ENCODE measurements at regions of chr1 and their contacts with region 1.

Region 1: GRCh38 chr1:23867953-23868556 is at the start of gene FUCA1:
- DNase-seq: peak; percentile 97
- H3K4me3 ChIP-seq: peak within 1 kb of the TSS; percentile 74
- H3K27ac ChIP-seq: peak within 1 kb of the TSS; percentile 21
- H3K4me1 ChIP-seq: peaks cover 25% of the 10 kb centered on the region
- CTCF ChIP-seq: peak; percentile 82
- total RNA-seq, gene FUCA1: 9.1 and 9.3 TPM in 2 replicates

Region 2: GRCh38 chr1:23436520-23437354 is 431.3 kb before region 1 on chr1:
- CTCF ChIA-PET with region 1: no interaction called
- POLR2A ChIA-PET with region 1: no interaction called
- intact Hi-C with region 1: no loop called
- DNase-seq: no peak
- H3K4me3 ChIP-seq: no peak overlapping the region
- H3K27ac ChIP-seq: no peak overlapping the region
- H3K4me1 ChIP-seq: peaks cover 8% of the 10 kb centered on the region
- CTCF ChIP-seq: no peak

Region 3: GRCh38 chr1:23809751-23810171 is 58.3 kb before region 1 on chr1:
- CTCF ChIA-PET with region 1: no interaction called
- POLR2A ChIA-PET with region 1: no interaction called
- intact Hi-C with region 1: loop called (anchors 1 kb)
- DNase-seq: peak; percentile 86
- H3K4me3 ChIP-seq: no peak overlapping the region
- H3K27ac ChIP-seq: peak overlapping the region; percentile 25
- H3K4me1 ChIP-seq: peaks cover 41% of the 10 kb centered on the region
- CTCF ChIP-seq: peak; percentile 89

Region 4: GRCh38 chr1:23902321-23903278 is 34.5 kb after region 1 on chr1:
- CTCF ChIA-PET with region 1: no interaction called
- POLR2A ChIA-PET with region 1: no interaction called
- intact Hi-C with region 1: loop called (anchors 1 kb)
- DNase-seq: no peak
- H3K4me3 ChIP-seq: no peak overlapping the region
- H3K27ac ChIP-seq: no peak overlapping the region
- H3K4me1 ChIP-seq: peaks cover 49% of the 10 kb centered on the region
- CTCF ChIP-seq: no peak

Measured in OCI-LY7 (cell line).